Esophagus squamous epithelium (tissue), 5 donors: ENCODE measurements at regions of chr12 and their contacts with region 1.

Region 1: GRCh38 chr12:57063991-57064685 is 14.2 kb upstream of the MYO1A start:
- DNase-seq: no peak
- H3K4me3 ChIP-seq: no peak overlapping the region
- H3K27ac ChIP-seq: peak overlapping the region in 1 of 4 donors; percentile 58
- H3K4me1 ChIP-seq: peaks cover 0 to 10% (median 0%) of the 10 kb centered on the region in 3 donors
- H3K27me3 ChIP-seq: no peaks in the 10 kb centered on the region
- CTCF ChIP-seq: no peak
- POLR2A ChIP-seq: no peak

Region 2: GRCh38 chr12:57005980-57006808 is 57.9 kb before region 1 on chr12 and contains the start of gene ZBTB39:
- intact Hi-C with region 1: loop called (anchors 5 kb)
- DNase-seq: no peak
- H3K4me3 ChIP-seq: peak within 1 kb of the TSS; percentile 87 to 95 (median 89)
- H3K27ac ChIP-seq: peak within 1 kb of the TSS; percentile 82 to 90 (median 88)
- H3K4me1 ChIP-seq: peaks cover 13 to 45% (median 19%) of the 10 kb centered on the region in 3 donors
- H3K27me3 ChIP-seq: no peaks in the 10 kb centered on the region
- CTCF ChIP-seq: peak in 4 of 6 experiments; percentile 35 to 54 (median 44)
- POLR2A ChIP-seq: peak in 2 of 4 donors; percentile 19 to 33
- total RNA-seq, gene ZBTB39: 2.1 to 6.5 (median 4.0) TPM

Region 3: DNA sequence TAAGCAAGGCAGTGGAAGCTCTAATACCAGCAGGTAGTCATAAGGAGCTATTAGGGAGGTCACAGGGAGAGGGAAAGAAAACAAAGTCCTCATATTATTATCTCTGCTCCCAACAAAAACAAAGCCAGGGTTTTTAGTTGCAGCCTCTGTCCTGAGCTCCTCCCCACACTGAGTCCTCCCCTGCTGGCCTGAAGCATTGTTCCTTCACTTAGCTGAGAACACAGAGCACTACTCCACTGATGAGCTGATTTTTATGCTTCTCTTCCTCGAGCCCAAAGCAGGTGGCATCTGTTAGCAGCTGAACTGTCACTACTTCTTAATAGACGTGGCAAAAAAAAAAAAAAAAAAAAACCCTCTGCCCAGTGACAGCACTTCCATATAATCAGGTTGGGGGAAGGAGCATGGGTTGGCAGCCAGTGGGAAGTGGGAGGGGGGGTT is 197.3 kb after region 1 on chr12:
- intact Hi-C with region 1: no loop called
- DNase-seq: no peak
- H3K4me3 ChIP-seq: no peak overlapping the region
- H3K27ac ChIP-seq: no peak overlapping the region
- H3K4me1 ChIP-seq: no peaks in the 10 kb centered on the region
- H3K27me3 ChIP-seq: no peaks in the 10 kb centered on the region
- CTCF ChIP-seq: no peak
- POLR2A ChIP-seq: no peak